SK-N-SH (cell line): ENCODE measurements at regions of chr1 and their contacts with region 1.

Region 1: DNA sequence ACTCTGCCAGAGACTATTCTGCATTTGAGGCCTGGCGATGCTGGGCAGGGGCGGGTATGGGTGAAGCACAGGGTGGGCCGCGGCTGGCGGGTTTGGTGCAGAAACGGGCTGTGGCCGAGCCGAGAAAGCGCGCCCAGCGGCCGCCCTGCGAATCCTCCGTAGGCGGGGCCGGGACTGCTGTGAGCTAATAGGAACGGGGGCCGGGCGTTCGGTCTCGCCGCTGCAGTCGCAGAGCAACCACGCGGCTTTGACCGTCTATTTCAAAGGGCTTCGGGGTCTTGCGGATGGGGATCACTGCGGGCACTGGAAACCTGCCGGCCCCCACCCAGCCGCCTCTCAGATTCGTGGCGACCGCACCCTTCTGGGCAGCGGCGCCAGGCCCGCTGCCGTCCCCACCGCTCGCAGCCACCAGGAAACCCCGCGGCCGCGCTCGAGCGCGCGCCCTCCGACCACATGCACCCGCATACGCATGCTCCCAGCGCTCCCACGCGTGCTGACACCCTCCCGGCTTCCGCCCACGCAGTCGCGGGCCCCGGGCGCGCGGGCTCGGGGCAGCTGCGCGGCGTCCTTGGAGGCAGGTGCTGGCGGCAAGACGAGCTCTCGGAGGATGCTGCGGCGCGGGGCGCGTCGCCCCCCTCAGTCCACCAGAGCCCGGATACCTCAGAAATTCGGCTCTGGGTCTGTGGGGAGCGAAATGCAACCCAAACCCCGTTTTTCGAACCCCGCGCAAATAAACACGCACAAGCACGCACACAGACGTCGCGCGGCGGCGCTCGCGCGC is 32.6 kb downstream of the DNTTIP2 start:
- DNase-seq: peak; percentile 90
- H3K4me3 ChIP-seq: peak overlapping the region; percentile 85 to 94
- H3K27ac ChIP-seq: peak overlapping the region; percentile 88 to 96
- H3K4me1 ChIP-seq: peaks cover 23% of the 10 kb centered on the region in 2 experiments; a peak in 3 of 4 replicates
- H3K27me3 ChIP-seq: no peaks in the 10 kb centered on the region
- CTCF ChIP-seq: peak; percentile 39
- EP300 ChIP-seq: no peak
- RAD21 ChIP-seq: no peak; the same call in 1 of the 2 replicates

Region 2: DNA sequence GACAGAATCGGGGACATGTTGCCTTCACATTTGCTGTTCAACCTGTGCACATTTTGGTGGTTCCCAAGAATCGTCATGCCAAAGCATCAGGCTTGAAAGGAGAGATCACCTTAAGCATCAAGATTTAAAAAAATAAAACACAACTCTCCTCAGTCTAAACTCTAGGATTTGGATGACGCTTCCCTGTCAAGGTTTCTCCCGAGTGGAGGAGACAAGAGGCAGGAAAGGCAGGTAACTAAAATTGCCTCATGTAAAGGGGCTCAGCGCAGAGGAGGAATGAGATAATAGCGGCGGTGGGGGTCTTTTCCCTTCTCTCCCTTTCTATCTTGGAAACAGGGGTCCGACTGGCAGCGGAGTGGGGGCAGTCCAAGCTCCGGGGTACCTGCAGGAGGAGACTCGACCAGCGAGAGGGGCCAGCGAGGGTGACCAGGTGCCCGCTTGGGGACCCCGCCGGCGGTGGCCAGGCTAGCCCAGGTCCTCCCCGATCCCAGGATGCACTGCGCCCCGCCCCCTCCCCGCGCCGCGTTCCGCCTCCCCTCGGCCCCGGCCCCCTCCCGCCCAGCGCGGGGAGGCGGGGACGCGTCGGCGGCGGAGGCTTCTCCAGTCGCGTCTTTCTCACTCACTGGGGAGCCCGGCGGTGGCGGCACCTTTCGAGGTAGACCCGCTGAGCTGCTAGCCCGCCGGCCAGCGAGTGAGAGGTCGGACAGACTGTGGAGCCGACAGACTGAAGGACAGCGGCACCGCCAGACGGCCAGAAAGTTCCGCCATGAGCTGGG is 398.7 kb before region 1 on chr1 and contains the start of gene FNBP1L:
- CTCF ChIA-PET with region 1: interaction called, 18 read pairs
- POLR2A ChIA-PET with region 1: no interaction called
- DNase-seq: peak; percentile 98
- H3K4me3 ChIP-seq: peak within 1 kb of the TSS; percentile 96 to 99
- H3K27ac ChIP-seq: peak within 1 kb of the TSS; percentile 78 to 92
- H3K4me1 ChIP-seq: peaks cover 4 to 13% of the 10 kb centered on the region in 2 experiments; a peak in 3 of 4 replicates
- H3K27me3 ChIP-seq: no peaks in the 10 kb centered on the region
- CTCF ChIP-seq: no peak
- EP300 ChIP-seq: no peak
- RAD21 ChIP-seq: no peak
- polyA plus RNA-seq, gene FNBP1L: 16.5 and 21.5 TPM in 2 replicates

Region 3: DNA sequence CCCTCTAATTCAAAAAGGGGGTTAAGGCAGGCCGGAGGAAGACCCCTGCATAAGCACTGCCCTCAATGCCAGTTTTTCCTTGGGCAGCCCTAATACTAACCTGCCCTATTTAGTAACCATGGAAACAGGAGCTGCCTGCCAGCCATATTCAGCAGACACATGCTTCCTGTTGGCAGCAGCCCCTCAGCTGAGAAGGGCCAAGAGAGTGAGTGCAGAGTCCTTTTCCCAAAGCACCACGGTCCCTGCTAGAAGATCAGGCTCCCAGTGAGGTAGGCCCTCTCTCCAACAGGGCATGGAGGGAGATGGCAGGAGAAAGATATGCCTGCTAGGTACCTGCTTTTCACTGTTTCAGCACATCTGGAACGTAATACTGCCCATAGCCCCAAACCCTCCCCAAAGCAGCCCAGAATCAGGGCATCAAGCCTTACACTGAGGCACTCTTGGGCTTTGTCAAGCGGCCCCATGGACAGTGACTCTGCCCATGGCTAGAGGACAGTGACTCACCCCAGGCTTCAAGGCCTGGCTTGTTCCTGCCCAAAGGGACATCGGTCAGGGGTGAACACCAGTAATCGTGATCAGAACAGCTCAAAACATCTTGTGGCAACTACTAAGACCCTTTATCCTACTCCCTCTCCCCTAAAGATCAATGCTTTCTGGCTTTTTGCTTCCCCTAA is 229.3 kb before region 1 on chr1:
- CTCF ChIA-PET with region 1: interaction called, 12 read pairs
- POLR2A ChIA-PET with region 1: interaction called, 7 read pairs
- DNase-seq: peak; percentile 68
- H3K4me3 ChIP-seq: 0 out of 4 replicates have a peak overlapping the region, but pooled peaks of 1 of the 2 experiments have one; percentile 4
- H3K27ac ChIP-seq: peak overlapping the region; percentile 97 to 98
- H3K4me1 ChIP-seq: peaks cover 80 to 84% of the 10 kb centered on the region in 2 experiments
- H3K27me3 ChIP-seq: no peaks in the 10 kb centered on the region
- CTCF ChIP-seq: no peak
- EP300 ChIP-seq: no peak
- RAD21 ChIP-seq: no peak; the same call in 1 of the 2 replicates

Region 4: GRCh38 chr1:93661829-93662474 is 184.4 kb before region 1 on chr1:
- CTCF ChIA-PET with region 1: interaction called, 18 read pairs
- POLR2A ChIA-PET with region 1: no interaction called
- DNase-seq: no peak
- H3K4me3 ChIP-seq: peak overlapping the region in 1 of 2 experiments; percentile 2; a peak in 1 of 4 replicates
- H3K27ac ChIP-seq: peak overlapping the region; percentile 94 to 99
- H3K4me1 ChIP-seq: peaks cover 44 to 49% of the 10 kb centered on the region in 2 experiments
- H3K27me3 ChIP-seq: no peaks in the 10 kb centered on the region
- CTCF ChIP-seq: no peak
- EP300 ChIP-seq: peak in 1 of 2 experiments; percentile 53; a peak in 1 of 4 replicates
- RAD21 ChIP-seq: no peak

Region 5: DNA sequence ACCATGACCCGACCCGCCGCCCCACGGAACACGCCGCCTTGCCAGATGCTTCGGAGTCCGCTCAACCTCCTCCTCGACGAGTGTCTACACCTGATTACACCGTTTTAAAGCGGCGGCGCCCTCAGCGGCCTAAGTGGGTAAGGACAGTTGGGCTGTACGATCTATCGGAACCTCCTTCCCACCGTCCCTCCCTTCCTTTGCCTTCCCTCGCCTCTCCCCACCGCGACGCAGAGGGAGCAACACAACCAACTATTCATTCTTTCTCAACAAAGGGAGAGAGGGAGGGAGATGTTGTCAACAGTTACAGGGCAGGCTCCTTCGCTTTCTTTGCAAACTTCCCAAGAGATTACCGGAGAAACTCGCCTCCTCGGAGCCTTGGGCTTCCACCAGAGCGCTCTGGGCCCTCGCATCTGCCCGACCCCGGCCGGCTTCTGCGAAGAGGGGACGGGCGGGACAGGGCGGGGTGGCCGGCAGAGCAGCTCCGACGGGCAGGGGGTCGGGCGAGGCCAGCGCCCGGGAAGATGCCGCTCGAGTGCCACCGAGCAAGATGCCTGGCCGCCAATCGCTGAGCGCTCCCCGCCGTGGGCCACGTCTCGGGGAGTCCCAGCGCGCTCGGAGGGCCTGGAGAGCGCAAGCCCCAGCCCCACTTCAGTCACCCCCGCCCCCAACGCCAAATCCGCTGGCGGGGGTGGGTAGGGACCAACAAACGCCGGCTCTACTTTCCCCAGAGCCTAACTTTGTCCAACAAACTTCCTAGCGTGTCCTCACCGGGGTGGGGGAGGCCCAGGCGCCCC is 165.4 kb before region 1 on chr1:
- CTCF ChIA-PET with region 1: interaction called, 10 read pairs
- POLR2A ChIA-PET with region 1: no interaction called
- DNase-seq: peak; percentile 80
- H3K4me3 ChIP-seq: peak overlapping the region; percentile 75 to 86
- H3K27ac ChIP-seq: peak overlapping the region; percentile 86 to 95
- H3K4me1 ChIP-seq: peaks cover 19 to 24% of the 10 kb centered on the region in 2 experiments; a peak in 3 of 4 replicates
- H3K27me3 ChIP-seq: no peaks in the 10 kb centered on the region
- CTCF ChIP-seq: peak; percentile 64
- EP300 ChIP-seq: no peak
- RAD21 ChIP-seq: peak; percentile 64

Region 6: DNA sequence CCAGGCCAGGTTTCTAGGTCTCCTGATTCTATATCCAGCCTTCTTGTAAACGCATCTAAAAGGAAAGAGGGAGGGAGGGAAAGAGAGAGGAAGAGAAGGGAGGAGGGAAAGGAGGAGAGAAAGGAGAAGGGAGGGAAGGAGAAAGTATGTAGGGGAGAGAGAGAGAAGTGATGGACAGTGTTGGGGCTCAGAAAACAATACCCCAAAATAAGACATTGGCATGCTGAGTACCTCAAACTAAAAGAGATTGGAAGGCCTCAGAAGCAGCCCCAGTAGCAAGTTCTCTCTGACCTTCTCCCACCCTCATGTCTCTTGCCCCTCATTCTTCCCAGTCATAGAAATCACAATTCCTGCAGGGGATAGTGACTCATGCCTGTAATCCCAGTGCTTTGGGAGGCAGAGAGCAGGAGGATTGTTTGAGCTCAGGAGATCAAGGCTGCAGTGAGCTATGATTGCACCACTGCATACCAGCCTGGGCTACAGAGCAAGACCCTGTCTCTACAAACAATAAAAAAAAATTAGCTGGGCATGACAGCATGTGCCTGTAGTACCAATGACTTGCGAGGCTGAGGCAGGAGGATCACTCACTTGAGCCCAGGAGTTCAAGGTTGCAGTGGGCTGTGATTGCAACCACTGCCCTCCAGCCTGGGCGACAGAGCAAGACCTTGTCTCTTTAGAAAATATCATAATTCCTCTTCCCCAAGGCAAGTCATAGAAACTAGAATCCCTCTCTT is 18.6 kb before region 1 on chr1:
- CTCF ChIA-PET with region 1: interaction called, 202 read pairs
- POLR2A ChIA-PET with region 1: interaction called, 4 read pairs
- DNase-seq: no peak
- H3K4me3 ChIP-seq: no peak overlapping the region
- H3K27ac ChIP-seq: peak overlapping the region; percentile 60 to 96
- H3K4me1 ChIP-seq: peaks cover 7 to 51% of the 10 kb centered on the region in 2 experiments; a peak in 3 of 4 replicates
- H3K27me3 ChIP-seq: no peaks in the 10 kb centered on the region
- CTCF ChIP-seq: no peak
- EP300 ChIP-seq: no peak
- RAD21 ChIP-seq: no peak

Region 7: GRCh38 chr1:93878889-93879586 is 32.6 kb after region 1 on chr1 and contains the start of gene DNTTIP2:
- CTCF ChIA-PET with region 1: interaction called, 6 read pairs
- POLR2A ChIA-PET with region 1: interaction called, 11 read pairs
- DNase-seq: peak; percentile 91
- H3K4me3 ChIP-seq: peak within 1 kb of the TSS; percentile 96 to 98
- H3K27ac ChIP-seq: peak within 1 kb of the TSS; percentile 89 to 95
- H3K4me1 ChIP-seq: peaks cover 5 to 11% of the 10 kb centered on the region in 2 experiments; a peak in 3 of 4 replicates
- H3K27me3 ChIP-seq: no peaks in the 10 kb centered on the region
- CTCF ChIP-seq: no peak
- EP300 ChIP-seq: no peak
- RAD21 ChIP-seq: no peak
- polyA plus RNA-seq, gene DNTTIP2: 9.6 and 13.1 TPM in 2 replicates

Region 8: GRCh38 chr1:94228640-94229375 is 382.4 kb after region 1 on chr1:
- CTCF ChIA-PET with region 1: no interaction called
- POLR2A ChIA-PET with region 1: no interaction called
- DNase-seq: no peak
- H3K4me3 ChIP-seq: no peak overlapping the region
- H3K27ac ChIP-seq: no peak overlapping the region
- H3K4me1 ChIP-seq: peaks cover 0 to 17% of the 10 kb centered on the region in 2 experiments; a peak in 2 of 4 replicates
- H3K27me3 ChIP-seq: no peaks in the 10 kb centered on the region
- CTCF ChIP-seq: no peak
- EP300 ChIP-seq: no peak
- RAD21 ChIP-seq: no peak